Ovary (tissue), 10 donors: ENCODE measurements at regions of chr12 and their contacts with region 1.

Region 1: DNA sequence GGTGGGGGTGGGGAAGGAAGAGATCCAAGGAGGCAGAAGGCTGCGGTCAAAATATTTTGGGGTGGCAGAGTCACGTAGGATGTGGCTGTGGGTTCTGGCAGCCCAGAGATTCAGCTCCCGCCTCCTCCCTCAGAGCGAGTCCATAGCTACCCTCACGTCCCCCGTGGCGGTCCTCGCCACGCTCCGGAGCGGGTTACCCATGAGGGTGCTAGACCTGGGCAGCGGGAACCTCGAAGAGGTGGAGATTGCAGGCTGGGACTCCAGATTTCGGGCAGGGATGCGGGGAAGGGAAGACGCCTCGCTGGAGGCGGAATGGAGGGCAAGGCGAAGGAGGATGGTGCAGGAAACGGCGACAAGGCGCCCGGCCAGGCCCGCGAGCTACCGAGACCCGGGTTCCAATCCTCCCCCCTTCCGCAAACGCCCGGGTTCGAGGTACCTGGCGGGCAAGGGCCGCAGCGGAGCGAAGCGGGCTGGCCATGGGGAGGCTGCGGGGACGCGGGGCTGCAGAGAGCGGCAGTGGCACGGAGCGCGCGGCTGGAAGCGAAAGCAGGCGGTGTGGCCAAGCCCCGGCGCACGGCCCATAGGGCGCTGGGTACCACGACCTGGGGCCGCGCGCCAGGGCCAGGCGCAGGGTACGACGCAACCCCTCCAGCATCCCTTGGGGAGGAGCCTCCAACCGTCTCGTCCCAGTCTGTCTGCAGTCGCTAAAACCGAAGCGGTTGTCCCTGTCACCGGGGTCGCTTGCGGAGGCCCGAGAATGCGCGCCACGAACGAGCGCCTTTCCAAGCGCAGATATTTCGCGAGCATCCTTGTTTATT is 46.2 kb downstream of the BCAT1 start:
- DNase-seq: no peak
- H3K4me3 ChIP-seq: peak overlapping the region; percentile 16
- H3K27ac ChIP-seq: no peak overlapping the region
- H3K4me1 ChIP-seq: peaks cover 3% of the 10 kb centered on the region
- H3K27me3 ChIP-seq: no peaks in the 10 kb centered on the region
- CTCF ChIP-seq: no peak
- EP300 ChIP-seq: no peak
- POLR2A ChIP-seq: no peak

Region 2: GRCh38 chr12:24608637-24609285 is 294.0 kb before region 1 on chr12:
- intact Hi-C with region 1: loop called in 1 of 4 experiments (anchors 5 kb)
- DNase-seq: no peak
- H3K4me3 ChIP-seq: no peak overlapping the region
- H3K27ac ChIP-seq: no peak overlapping the region
- H3K4me1 ChIP-seq: no peaks in the 10 kb centered on the region
- H3K27me3 ChIP-seq: no peaks in the 10 kb centered on the region
- CTCF ChIP-seq: no peak
- EP300 ChIP-seq: no peak
- POLR2A ChIP-seq: no peak